ENCODE measurements at regions of chr12 and their contacts with region 1.

Region 1: DNA sequence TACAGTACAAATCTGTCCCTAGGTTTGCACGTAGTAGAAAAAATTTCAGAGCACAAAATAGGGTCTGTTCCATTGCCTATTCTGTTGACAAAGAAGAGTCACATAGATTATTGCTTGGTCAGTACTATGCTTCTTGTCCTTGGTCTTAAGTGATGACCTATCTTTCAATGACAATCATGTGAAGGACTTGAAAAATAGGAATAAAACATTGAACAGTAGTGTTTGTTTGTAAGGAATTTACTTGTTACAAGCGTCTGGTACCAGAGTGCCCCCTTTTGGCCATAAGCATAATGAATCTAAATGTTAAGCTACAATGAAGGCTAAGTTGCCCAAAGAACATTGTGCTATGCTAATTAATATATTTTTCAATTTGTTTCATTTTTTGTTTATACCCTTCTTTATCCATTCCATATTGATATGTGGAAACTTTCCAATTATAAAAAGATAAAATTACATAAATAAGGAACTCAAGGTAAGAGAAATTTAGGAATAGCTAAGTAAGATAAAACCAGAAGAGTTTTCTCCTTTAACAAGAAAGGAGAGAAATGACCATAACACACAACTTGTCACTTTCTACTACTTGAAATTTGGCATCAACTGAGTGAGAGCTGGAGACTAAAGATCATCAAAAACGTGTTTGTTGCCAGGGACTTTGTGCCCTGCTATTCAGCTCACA is 204.7 kb downstream of the EPS8 start:
- DNase-seq: peak; percentile 31
- H3K4me3 Mint-ChIP-seq: no peak overlapping the region
- H3K27ac Mint-ChIP-seq: no peak overlapping the region
- H3K4me1 Mint-ChIP-seq: peaks cover 12% of the 10 kb centered on the region
- H3K27me3 Mint-ChIP-seq: peaks cover 5% of the 10 kb centered on the region

Region 2: DNA sequence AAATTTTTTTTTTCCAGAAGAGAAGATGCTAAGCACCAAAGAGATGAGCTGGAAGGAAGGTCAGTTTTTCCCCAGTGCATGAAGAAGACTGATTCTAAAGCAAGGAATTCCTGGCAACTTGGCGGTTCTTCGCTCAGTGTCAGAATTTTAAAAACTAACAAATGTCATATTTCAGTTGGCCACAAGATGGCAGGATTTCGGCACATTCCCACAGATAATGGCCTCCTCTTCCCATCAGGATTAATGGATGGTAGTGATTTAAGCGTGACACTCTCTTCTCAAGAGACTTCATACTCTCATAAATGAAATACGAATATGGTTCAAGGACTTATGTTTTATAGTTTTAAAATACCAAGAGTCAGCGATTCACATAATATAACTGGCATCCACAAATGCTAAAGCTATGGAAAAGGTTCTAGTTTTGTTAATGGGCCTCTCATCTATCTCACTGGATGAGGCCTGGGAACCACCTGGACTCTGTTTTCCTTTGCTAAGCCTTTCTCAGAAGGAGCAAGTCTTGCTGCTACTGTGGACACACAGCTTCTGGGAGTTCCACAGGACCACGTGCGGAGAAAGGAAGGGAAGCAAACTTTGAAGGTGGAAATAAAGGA is 308.3 kb before region 1 on chr12:
- CTCF ChIA-PET with region 1: interaction called, 10 read pairs
- POLR2A ChIA-PET with region 1: no interaction called
- DNase-seq: no peak
- H3K4me3 Mint-ChIP-seq: no peak overlapping the region
- H3K27ac Mint-ChIP-seq: no peak overlapping the region
- H3K4me1 Mint-ChIP-seq: peaks cover 13% of the 10 kb centered on the region
- H3K27me3 Mint-ChIP-seq: peaks cover 7% of the 10 kb centered on the region

Region 3: GRCh38 chr12:15322164-15323061 is 262.1 kb before region 1 on chr12 and contains the start of gene PTPRO:
- CTCF ChIA-PET with region 1: no interaction called
- POLR2A ChIA-PET with region 1: no interaction called
- DNase-seq: no peak
- H3K4me3 Mint-ChIP-seq: no peak within 1 kb of the TSS
- H3K27ac Mint-ChIP-seq: no peak within 1 kb of the TSS
- H3K4me1 Mint-ChIP-seq: peaks cover 6% of the 10 kb centered on the region
- H3K27me3 Mint-ChIP-seq: peaks cover 36% of the 10 kb centered on the region
- total RNA-seq, gene PTPRO: 1.5 to 2.5 TPM

Region 4: GRCh38 chr12:15526033-15526432 is 58.5 kb before region 1 on chr12:
- CTCF ChIA-PET with region 1: interaction called, 373 read pairs
- POLR2A ChIA-PET with region 1: no interaction called
- DNase-seq: no peak
- H3K4me3 Mint-ChIP-seq: no peak overlapping the region
- H3K27ac Mint-ChIP-seq: no peak overlapping the region
- H3K4me1 Mint-ChIP-seq: peaks cover 2% of the 10 kb centered on the region
- H3K27me3 Mint-ChIP-seq: peaks cover 30% of the 10 kb centered on the region

Region 5: DNA sequence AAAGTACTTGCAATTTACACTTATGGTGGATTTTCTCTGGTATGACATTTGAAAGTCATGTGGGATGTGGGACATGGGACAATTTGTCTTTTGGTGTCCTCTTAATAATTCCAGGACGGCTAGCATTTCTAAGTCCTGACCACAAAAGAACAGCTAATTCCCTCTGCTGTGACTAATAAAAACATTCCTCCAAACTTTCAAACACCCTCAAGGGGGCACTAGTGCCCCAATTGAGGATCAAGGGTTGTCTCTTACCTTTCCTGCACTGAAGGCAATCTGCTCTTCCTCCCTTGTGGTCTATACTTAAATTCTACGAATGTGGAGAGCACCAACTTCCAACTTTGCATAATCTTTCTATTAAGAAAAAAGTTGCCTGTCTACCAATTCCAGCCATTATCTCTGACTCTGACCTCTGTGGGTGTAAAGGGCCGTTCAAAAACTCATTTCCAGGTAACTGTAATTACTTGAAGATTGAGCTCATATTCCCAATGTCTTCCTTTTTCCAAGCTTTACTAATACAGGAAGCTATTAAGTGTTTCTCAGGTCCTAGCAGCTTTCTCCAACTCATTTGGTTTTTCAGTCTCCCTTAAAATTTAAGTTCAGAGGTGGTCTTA is 52.0 kb before region 1 on chr12:
- CTCF ChIA-PET with region 1: interaction called, 373 read pairs
- POLR2A ChIA-PET with region 1: interaction called, 13 read pairs
- DNase-seq: peak; percentile 61
- H3K4me3 Mint-ChIP-seq: no peak overlapping the region
- H3K27ac Mint-ChIP-seq: no peak overlapping the region
- H3K4me1 Mint-ChIP-seq: peaks cover 9% of the 10 kb centered on the region
- H3K27me3 Mint-ChIP-seq: peaks cover 10% of the 10 kb centered on the region

Region 6: DNA sequence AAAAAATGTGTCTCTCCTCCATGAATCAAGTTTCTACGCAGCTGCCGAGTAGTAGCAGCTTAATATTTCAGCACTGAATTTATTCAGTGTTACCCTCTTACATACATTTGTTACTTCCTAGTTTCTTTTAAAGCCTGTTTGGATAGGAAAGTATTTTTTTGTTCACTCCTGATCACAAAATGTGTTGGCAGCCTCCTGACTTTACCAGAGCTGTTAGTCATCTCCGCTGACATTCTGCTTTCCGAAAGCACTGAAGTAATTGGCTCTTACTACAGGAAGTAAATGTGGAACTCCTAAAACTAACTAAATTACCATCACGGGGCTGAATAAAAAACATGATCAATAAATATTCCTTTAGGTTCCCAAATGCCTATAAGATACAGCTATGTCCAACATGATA is 20.8 kb before region 1 on chr12:
- CTCF ChIA-PET with region 1: interaction called, 20 read pairs
- POLR2A ChIA-PET with region 1: interaction called, 4 read pairs
- DNase-seq: peak; percentile 32
- H3K4me3 Mint-ChIP-seq: peak overlapping the region; percentile 64
- H3K27ac Mint-ChIP-seq: peak overlapping the region; percentile 94
- H3K4me1 Mint-ChIP-seq: peaks cover 62% of the 10 kb centered on the region
- H3K27me3 Mint-ChIP-seq: no peaks in the 10 kb centered on the region

Region 7: GRCh38 chr12:15856097-15856982 is 271.8 kb after region 1 on chr12:
- CTCF ChIA-PET with region 1: interaction called, 69 read pairs
- POLR2A ChIA-PET with region 1: no interaction called
- DNase-seq: peak; percentile 38
- H3K4me3 Mint-ChIP-seq: no peak overlapping the region
- H3K27ac Mint-ChIP-seq: no peak overlapping the region
- H3K4me1 Mint-ChIP-seq: no peaks in the 10 kb centered on the region
- H3K27me3 Mint-ChIP-seq: peaks cover 16% of the 10 kb centered on the region

Region 8: DNA sequence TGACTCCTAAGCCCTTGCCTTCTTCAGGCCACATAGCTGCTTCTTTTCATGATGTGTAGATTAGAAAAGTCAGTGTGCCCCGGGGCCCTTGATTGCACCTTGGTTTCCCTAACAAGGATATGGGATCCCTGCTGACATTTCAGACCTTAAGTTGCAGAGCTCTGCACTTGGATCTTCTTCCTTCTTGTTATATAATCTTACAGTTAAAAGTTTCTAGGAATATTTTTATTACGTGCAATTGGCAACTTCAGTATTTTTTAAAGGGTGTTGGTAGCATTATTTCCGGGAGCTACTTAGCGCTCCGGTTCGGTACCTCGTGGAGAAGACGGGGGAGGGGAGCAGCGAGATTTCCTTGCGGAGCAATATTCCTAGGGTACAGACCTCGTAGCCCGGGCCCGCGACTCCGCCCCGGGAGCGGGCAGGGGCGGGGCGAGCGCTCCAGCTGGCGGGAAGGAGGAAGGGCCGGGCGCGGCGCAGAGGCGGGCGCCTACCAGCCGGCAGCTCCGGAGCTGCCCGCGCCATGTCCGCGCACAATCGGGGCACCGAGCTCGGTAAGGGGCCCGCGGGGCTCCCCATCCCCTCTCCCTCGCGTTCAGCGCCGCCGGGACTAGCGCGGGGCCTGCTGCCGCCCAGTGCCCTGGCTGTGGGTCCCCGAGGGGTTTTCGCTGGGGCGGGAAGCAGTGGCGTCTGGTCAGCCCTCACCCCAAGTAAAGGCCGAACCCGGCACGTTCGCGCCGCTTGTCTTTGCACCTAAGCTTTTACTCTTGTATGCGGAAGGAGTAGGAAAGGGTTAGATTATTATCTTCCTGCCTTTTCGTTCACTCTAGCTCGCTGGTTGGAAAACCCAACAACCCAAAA is 326.6 kb after region 1 on chr12 and contains the start of gene DERA:
- CTCF ChIA-PET with region 1: interaction called, 12 read pairs
- POLR2A ChIA-PET with region 1: no interaction called
- DNase-seq: peak; percentile 60
- H3K4me3 Mint-ChIP-seq: peak within 1 kb of the TSS; percentile 80
- H3K27ac Mint-ChIP-seq: peak within 1 kb of the TSS; percentile 61
- H3K4me1 Mint-ChIP-seq: peaks cover 20% of the 10 kb centered on the region
- H3K27me3 Mint-ChIP-seq: no peaks in the 10 kb centered on the region
- total RNA-seq, gene DERA: 21.3 to 24.4 TPM